ENCODE measurements at regions of chr1 and their contacts with region 1.

Region 1: DNA sequence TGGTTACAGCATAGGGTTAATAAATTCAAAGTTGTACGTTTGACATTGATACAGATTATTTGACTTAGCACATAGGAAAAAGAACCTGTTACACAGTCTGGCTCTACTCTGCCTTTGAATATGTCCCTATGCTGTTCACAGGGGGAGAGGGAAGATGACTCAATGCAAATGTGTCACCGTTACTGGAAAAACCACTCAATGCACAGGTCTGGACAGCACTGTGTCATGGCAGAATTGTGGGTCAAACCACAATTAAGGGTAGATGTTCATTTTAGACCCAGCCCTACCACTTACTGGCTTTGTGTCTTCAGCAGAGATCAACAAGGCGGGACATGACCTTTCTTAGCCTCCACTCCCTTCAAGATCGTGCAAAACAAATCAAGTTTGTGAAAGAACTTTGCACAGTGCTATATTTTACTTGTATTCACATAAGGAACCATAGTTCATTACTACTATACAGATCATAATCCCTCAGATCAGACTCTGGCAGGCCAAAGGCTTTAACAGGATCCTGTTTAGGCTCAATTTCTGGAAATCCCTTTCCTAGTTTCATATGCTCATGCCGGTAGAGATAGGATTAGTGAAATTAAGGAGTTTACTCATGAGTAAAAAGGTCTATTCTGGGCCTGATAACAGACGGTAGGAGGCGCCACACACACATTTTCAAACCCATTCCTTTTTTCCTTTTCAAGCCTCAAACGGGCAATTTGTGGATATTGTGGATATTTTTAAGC is 22.1 kb downstream of the EIF2D start:
- H3K4me3 ChIP-seq: no peak overlapping the region
- H3K27ac ChIP-seq: no peak overlapping the region
- H3K4me1 ChIP-seq: no peaks in the 10 kb centered on the region
- CTCF ChIP-seq: no peak

Region 2: GRCh38 chr1:206489980-206490770 is 100.0 kb before region 1 on chr1:
- CTCF ChIA-PET with region 1: interaction called, 115 read pairs
- POLR2A ChIA-PET with region 1: no interaction called
- H3K4me3 ChIP-seq: no peak overlapping the region
- H3K27ac ChIP-seq: no peak overlapping the region
- H3K4me1 ChIP-seq: 0 out of 2 replicates have a peak, but pooled peaks cover under 1% of the 10 kb centered on the region
- CTCF ChIP-seq: peak; percentile 94

Region 3: GRCh38 chr1:206643118-206643698 is 53.0 kb after region 1 on chr1:
- CTCF ChIA-PET with region 1: no interaction called
- POLR2A ChIA-PET with region 1: no interaction called
- H3K4me3 ChIP-seq: no peak overlapping the region
- H3K27ac ChIP-seq: no peak overlapping the region
- H3K4me1 ChIP-seq: no peaks in the 10 kb centered on the region
- CTCF ChIP-seq: no peak

Region 4: GRCh38 chr1:206865013-206865671 is 274.9 kb after region 1 on chr1 and contains the start of gene IL20:
- CTCF ChIA-PET with region 1: no interaction called
- POLR2A ChIA-PET with region 1: no interaction called
- H3K4me3 ChIP-seq: no peak within 1 kb of the TSS
- H3K27ac ChIP-seq: no peak within 1 kb of the TSS
- H3K4me1 ChIP-seq: no peaks in the 10 kb centered on the region
- CTCF ChIP-seq: peak; percentile 68